ENCODE measurements at regions of chr1 and their contacts with region 1.

Region 1: GRCh38 chr1:44454704-44455103 is 49.6 kb downstream of the RNF220 start:
- DNase-seq: no peak
- H3K4me3 ChIP-seq: no peak overlapping the region
- CTCF ChIP-seq: no peak

Region 2: GRCh38 chr1:44390277-44390676 is 64.4 kb before region 1 on chr1:
- in situ Hi-C with region 1: loop called (anchors 5 kb)
- DNase-seq: peak; percentile 54
- H3K4me3 ChIP-seq: no peak overlapping the region
- CTCF ChIP-seq: no peak

Region 3: DNA sequence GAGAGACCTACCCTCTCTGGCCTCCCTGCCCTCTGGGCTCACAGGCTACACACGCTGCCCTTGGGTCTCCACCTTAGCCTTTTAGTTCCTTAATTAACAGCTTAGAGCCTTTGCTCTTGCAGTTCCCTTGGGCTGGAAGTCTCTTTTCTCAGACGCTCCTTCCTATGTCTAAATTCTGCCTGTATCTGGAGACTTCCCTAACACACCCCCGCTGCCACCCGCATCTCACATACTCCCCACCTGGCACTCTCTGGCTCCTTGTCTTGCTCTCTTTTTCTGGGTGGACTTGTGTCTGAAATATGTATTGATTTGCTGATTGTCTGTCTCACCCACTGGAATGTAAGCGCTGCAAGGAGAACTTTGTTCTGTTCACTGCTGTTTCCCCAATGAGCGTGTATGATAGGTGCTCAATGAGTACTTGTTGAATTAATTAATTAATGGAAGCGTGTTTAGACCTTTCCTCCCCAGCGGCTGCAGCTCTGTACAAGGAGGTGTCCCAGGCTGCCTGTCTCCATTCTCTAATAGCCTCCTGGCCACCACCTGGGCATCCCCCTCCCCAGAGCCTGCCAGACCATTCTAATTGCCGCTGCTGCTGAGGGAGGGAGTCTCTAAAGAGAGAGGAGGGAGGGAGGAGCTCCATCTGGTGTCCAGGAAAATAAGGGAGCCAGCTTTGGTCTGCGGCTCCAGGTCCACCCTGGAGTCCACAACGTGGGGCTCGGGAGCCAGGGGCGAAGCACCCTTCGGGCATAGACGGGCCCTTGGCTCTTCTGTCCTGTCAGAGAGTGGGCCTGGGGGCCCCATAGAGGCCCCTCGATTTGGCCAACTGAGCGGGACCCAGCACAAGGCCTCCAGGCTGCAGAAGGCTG is 45.7 kb after region 1 on chr1:
- in situ Hi-C with region 1: no loop called
- DNase-seq: no peak
- H3K4me3 ChIP-seq: no peak overlapping the region
- CTCF ChIP-seq: peak; percentile 30